PC-9 (cell line): ENCODE measurements at regions of chr15 and their contacts with region 1.

Region 1: GRCh38 chr15:35068846-35069475 is 16.1 kb downstream of the NANOGP8 start:
- DNase-seq: no peak
- H3K4me3 ChIP-seq: no peak overlapping the region
- H3K27ac ChIP-seq: no peak overlapping the region
- H3K4me1 ChIP-seq: no peaks in the 10 kb centered on the region
- H3K27me3 ChIP-seq: no peaks in the 10 kb centered on the region
- CTCF ChIP-seq: no peak

Region 2: DNA sequence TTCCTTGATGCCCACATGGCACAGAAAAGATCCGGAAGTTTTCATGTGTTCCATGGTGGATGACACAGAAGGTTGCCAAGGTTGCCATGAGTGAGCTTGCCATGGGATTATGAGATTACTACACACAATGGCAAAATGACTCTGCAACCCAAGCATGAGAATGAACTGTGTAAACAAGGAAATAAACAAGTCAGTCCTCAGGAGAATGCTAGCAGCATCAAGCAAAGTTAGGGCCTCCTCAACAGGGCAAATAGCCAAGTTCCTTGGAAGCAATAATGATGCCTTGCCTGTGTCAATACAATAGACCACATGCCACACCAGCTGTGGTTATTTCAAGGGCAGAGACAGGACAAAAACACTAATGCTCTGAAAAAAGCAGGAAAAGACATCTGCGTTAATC is 141.2 kb before region 1 on chr15:
- CTCF ChIA-PET with region 1: no interaction called
- POLR2A ChIA-PET with region 1: no interaction called
- intact Hi-C with region 1: no loop called
- DNase-seq: peak in 1 of 2 experiments; percentile 44
- H3K4me3 ChIP-seq: no peak overlapping the region
- H3K27ac ChIP-seq: no peak overlapping the region
- H3K4me1 ChIP-seq: no peaks in the 10 kb centered on the region
- H3K27me3 ChIP-seq: no peaks in the 10 kb centered on the region
- CTCF ChIP-seq: no peak

Region 3: GRCh38 chr15:35038660-35039451 is 30.1 kb before region 1 on chr15:
- CTCF ChIA-PET with region 1: no interaction called
- POLR2A ChIA-PET with region 1: interaction called, 15 read pairs
- intact Hi-C with region 1: no loop called
- DNase-seq: peak in 1 of 2 experiments; percentile 87
- H3K4me3 ChIP-seq: peak overlapping the region; percentile 40; the same call in 1 of the 2 replicates
- H3K27ac ChIP-seq: peak overlapping the region; percentile 87
- H3K4me1 ChIP-seq: peaks cover 19% of the 10 kb centered on the region
- H3K27me3 ChIP-seq: no peaks in the 10 kb centered on the region
- CTCF ChIP-seq: no peak

Region 4: DNA sequence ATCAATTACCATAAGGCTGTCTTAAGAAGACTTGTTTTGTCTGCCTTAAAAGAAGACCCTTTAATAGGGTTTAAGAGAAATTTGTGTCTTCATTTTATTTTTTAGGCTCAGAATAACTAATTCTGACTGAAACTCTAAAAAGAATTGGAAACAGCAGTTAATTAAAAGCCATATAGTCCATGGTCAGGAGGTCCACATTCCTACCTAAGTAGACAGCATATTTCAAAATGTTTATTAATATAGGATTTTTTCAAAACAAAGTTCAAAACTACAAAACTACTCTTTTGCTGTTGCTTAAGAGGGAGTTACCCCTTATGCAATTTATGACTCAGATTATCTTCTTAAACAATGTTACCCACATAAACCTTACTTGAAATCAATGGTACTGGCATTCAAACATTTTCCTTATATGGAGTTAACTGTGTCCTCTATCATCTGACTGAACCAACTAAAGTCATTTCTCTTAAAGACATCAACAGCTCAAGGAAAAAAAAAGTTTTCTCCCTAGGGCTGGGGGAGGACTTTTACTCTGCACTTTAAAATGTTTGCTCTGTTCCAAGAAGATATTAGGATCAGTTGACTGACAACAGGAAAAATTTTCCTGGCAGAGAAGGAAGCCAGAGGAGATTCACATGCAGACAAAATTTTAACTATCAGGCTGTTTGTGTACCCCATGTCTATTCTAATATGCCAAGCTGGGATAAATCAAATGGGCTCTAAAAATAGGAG is 72.9 kb after region 1 on chr15:
- CTCF ChIA-PET with region 1: no interaction called
- POLR2A ChIA-PET with region 1: no interaction called
- intact Hi-C with region 1: no loop called
- DNase-seq: peak in 1 of 2 experiments; percentile 73
- H3K4me3 ChIP-seq: no peak overlapping the region
- H3K27ac ChIP-seq: peak overlapping the region; percentile 63
- H3K4me1 ChIP-seq: peaks cover 6% of the 10 kb centered on the region
- H3K27me3 ChIP-seq: no peaks in the 10 kb centered on the region
- CTCF ChIP-seq: no peak